ENCODE measurements at regions of chr5 and their contacts with region 1.

Region 1: GRCh38 chr5:135977375-135977928 is 22.7 kb upstream of the LECT2 start:
- DNase-seq: peak; percentile 79
- ATAC-seq: peak; percentile 85
- H3K4me3 Mint-ChIP-seq: no peak overlapping the region
- H3K27ac Mint-ChIP-seq: no peak overlapping the region
- H3K4me1 Mint-ChIP-seq: no peaks in the 10 kb centered on the region
- H3K27me3 Mint-ChIP-seq: peaks cover 38% of the 10 kb centered on the region

Region 2: GRCh38 chr5:136062366-136063274 is 85.2 kb after region 1 on chr5:
- CTCF ChIA-PET with region 1: interaction called, 5 read pairs
- POLR2A ChIA-PET with region 1: no interaction called
- intact Hi-C with region 1: loop called (anchors 2 to 5 kb)
- DNase-seq: peak; percentile 51
- ATAC-seq: peak; percentile 86
- H3K4me3 Mint-ChIP-seq: no peak overlapping the region
- H3K27ac Mint-ChIP-seq: no peak overlapping the region
- H3K4me1 Mint-ChIP-seq: no peaks in the 10 kb centered on the region
- H3K27me3 Mint-ChIP-seq: peaks cover 2% of the 10 kb centered on the region

Region 3: DNA sequence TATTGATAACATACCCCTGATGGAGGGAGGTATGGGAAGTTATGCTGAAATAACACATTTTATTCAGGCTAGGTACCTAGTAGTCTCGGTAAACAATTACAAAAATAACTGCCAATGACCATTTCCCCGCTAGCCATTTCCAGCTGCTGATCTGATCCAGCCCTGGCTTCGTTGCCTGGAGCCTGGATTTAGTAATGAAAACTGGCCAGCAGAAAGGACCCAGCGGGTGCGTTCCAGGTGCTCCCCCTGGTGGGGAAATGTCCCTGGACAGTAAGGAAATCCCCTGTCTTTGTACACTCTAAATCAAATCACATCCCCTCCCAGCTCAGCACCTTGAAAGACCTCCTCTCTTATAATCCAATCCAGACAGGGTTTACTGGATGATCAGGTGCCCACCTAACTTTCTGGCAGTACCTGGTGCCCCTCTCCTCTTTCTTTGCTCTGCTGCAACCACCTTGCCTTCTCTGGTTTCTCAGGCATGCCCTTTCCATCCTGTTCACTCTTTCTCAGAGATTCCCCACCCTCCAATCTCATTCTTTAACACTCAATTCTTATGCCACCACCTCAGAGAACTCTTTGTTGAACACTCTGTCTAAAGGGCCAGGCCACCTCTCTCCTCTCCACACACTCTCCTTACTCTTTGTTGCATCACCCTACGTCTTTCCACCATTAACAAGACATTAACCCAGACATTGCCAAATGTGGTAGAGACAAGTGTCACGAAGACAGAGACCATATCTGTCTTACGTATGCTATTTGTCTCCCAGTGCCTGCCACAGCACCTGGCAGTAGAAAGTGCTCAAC is 105.1 kb after region 1 on chr5:
- CTCF ChIA-PET with region 1: interaction called, 6 read pairs
- POLR2A ChIA-PET with region 1: no interaction called
- intact Hi-C with region 1: loop called (anchors 1 to 2 kb)
- DNase-seq: peak; percentile 76
- ATAC-seq: no peak
- H3K4me3 Mint-ChIP-seq: no peak overlapping the region
- H3K27ac Mint-ChIP-seq: no peak overlapping the region
- H3K4me1 Mint-ChIP-seq: peaks cover 3% of the 10 kb centered on the region
- H3K27me3 Mint-ChIP-seq: peaks cover 24% of the 10 kb centered on the region

Region 4: GRCh38 chr5:136174021-136174659 is 196.7 kb after region 1 on chr5:
- CTCF ChIA-PET with region 1: no interaction called
- POLR2A ChIA-PET with region 1: no interaction called
- intact Hi-C with region 1: loop called in 1 of 2 experiments (anchors 10 kb)
- DNase-seq: no peak
- ATAC-seq: no peak
- H3K4me3 Mint-ChIP-seq: no peak overlapping the region
- H3K27ac Mint-ChIP-seq: no peak overlapping the region
- H3K4me1 Mint-ChIP-seq: no peaks in the 10 kb centered on the region
- H3K27me3 Mint-ChIP-seq: peaks cover 2% of the 10 kb centered on the region

Region 5: GRCh38 chr5:136212252-136212721 is 234.8 kb after region 1 on chr5:
- CTCF ChIA-PET with region 1: no interaction called
- POLR2A ChIA-PET with region 1: no interaction called
- intact Hi-C with region 1: loop called in 1 of 2 experiments (anchors 10 kb)
- DNase-seq: peak; percentile 72
- ATAC-seq: no peak
- H3K4me3 Mint-ChIP-seq: no peak overlapping the region
- H3K27ac Mint-ChIP-seq: no peak overlapping the region
- H3K4me1 Mint-ChIP-seq: no peaks in the 10 kb centered on the region
- H3K27me3 Mint-ChIP-seq: peaks cover 28% of the 10 kb centered on the region

Measured in activated CD4-positive, alpha-beta T cell treated with anti-CD3 and anti-CD28 coated beads for 36 hours (primary cell).